Aorta (tissue), 5 donors: ENCODE measurements at regions of chr1 and their contacts with region 1.

Region 1: GRCh38 chr1:192808518-192809306 is at the start of gene RGS2:
- DNase-seq: peak; percentile 95 to 96
- ATAC-seq: peak; percentile 98
- H3K4me3 ChIP-seq: peak within 1 kb of the TSS; percentile 72 to 87
- H3K27ac ChIP-seq: peak within 1 kb of the TSS in 1 of 2 donors; percentile 90
- H3K4me1 ChIP-seq: no peaks in the 10 kb centered on the region
- H3K27me3 ChIP-seq: no peaks in the 10 kb centered on the region
- total RNA-seq, gene RGS2: 56.6 to 99.1 TPM

Region 2: GRCh38 chr1:192477630-192478029 is 331.1 kb before region 1 on chr1:
- intact Hi-C with region 1: loop called (anchors 5 to 10 kb)
- DNase-seq: no peak
- ATAC-seq: peak; percentile 74
- H3K4me3 ChIP-seq: no peak overlapping the region
- H3K27ac ChIP-seq: no peak overlapping the region
- H3K4me1 ChIP-seq: no peaks in the 10 kb centered on the region
- H3K27me3 ChIP-seq: no peaks in the 10 kb centered on the region

Region 3: GRCh38 chr1:192739476-192740184 is 69.1 kb before region 1 on chr1:
- intact Hi-C with region 1: no loop called
- DNase-seq: no peak
- ATAC-seq: no peak
- H3K4me3 ChIP-seq: no peak overlapping the region
- H3K27ac ChIP-seq: no peak overlapping the region
- H3K4me1 ChIP-seq: no peaks in the 10 kb centered on the region
- H3K27me3 ChIP-seq: no peaks in the 10 kb centered on the region

Region 4: GRCh38 chr1:192846950-192847349 is 38.2 kb after region 1 on chr1:
- intact Hi-C with region 1: no loop called
- DNase-seq: no peak
- ATAC-seq: no peak
- H3K4me3 ChIP-seq: no peak overlapping the region
- H3K27ac ChIP-seq: no peak overlapping the region
- H3K4me1 ChIP-seq: peaks cover 0 to under 1% of the 10 kb centered on the region in 2 donors
- H3K27me3 ChIP-seq: no peaks in the 10 kb centered on the region

Region 5: GRCh38 chr1:192904438-192904895 is 95.8 kb after region 1 on chr1:
- intact Hi-C with region 1: loop called (anchors 5 kb)
- DNase-seq: no peak
- ATAC-seq: peak; percentile 79
- H3K4me3 ChIP-seq: peak overlapping the region; percentile 34 to 40
- H3K27ac ChIP-seq: peak overlapping the region; percentile 63 to 76
- H3K4me1 ChIP-seq: peaks cover 0 to 1% of the 10 kb centered on the region in 2 donors
- H3K27me3 ChIP-seq: no peaks in the 10 kb centered on the region

Region 6: GRCh38 chr1:193019442-193020026 is 210.8 kb after region 1 on chr1:
- intact Hi-C with region 1: loop called (anchors 2 to 5 kb)
- DNase-seq: no peak
- ATAC-seq: no peak
- H3K4me3 ChIP-seq: no peak overlapping the region
- H3K27ac ChIP-seq: no peak overlapping the region
- H3K4me1 ChIP-seq: no peaks in the 10 kb centered on the region
- H3K27me3 ChIP-seq: no peaks in the 10 kb centered on the region

Region 7: DNA sequence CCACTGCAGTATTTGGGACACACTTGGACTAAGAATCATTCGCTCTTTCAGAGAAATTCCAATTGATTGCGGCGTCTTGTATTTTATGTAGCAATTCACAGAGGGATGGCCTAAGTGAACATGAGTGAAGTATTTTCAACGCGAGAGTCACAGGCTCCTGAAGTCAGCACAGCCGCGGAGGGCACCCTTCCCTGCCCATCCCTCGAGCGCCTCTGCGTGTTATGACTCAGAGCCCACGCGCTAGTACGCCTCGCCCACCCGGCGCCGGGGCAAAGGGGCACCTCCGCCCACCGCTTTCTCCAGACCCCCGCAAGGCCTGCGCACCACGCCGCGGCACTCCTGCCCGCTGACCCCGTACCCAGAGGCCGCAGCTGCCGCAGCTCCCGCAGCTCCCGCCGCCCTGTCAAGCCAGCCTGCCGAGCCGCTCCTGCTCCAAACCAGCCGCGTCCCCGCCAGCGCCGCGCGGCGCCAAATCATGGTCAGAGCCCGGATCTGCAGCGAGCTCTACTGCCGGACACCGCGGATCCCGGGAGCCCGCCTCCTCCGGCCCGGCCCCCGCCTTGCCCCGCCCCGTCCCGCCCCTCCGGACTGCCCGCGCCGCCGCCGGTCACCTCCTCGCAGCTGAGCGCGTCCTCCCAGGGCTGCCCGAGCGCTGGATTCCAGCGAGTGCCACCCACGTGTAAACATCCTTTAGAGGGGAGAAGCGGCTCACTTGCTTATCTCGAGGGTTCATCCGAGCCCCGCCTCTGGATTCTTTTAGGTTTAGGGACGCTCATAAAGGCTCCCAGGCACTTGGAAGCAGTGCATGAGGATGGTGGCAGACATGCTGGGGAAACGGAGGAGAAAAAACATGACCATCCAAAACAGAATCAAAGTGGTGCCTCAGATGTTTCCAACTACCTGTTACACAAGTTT is 296.5 kb after region 1 on chr1 and contains the start of gene GLRX2:
- intact Hi-C with region 1: loop called in 1 of 2 experiments (anchors 10 kb)
- DNase-seq: peak; percentile 86 to 96
- ATAC-seq: peak; percentile 98
- H3K4me3 ChIP-seq: peak within 1 kb of the TSS; percentile 55 to 62
- H3K27ac ChIP-seq: peak within 1 kb of the TSS; percentile 28 to 83
- H3K4me1 ChIP-seq: no peaks in the 10 kb centered on the region
- H3K27me3 ChIP-seq: no peaks in the 10 kb centered on the region
- total RNA-seq, gene GLRX2: 13.4 to 14.4 TPM

Region 8: GRCh38 chr1:193121616-193122593 is 313.2 kb after region 1 on chr1 and contains the start of gene CDC73:
- intact Hi-C with region 1: loop called in 1 of 2 experiments (anchors 10 kb)
- DNase-seq: peak; percentile 99 to 100
- ATAC-seq: peak; percentile 100
- H3K4me3 ChIP-seq: peak within 1 kb of the TSS; percentile 85 to 92
- H3K27ac ChIP-seq: peak within 1 kb of the TSS; percentile 53 to 68
- H3K4me1 ChIP-seq: peaks cover 0 to 5% of the 10 kb centered on the region in 2 donors
- H3K27me3 ChIP-seq: no peaks in the 10 kb centered on the region
- total RNA-seq, gene CDC73: 76.2 to 76.5 TPM